ENCODE measurements at regions of chr17 and their contacts with region 1.

Region 1: DNA sequence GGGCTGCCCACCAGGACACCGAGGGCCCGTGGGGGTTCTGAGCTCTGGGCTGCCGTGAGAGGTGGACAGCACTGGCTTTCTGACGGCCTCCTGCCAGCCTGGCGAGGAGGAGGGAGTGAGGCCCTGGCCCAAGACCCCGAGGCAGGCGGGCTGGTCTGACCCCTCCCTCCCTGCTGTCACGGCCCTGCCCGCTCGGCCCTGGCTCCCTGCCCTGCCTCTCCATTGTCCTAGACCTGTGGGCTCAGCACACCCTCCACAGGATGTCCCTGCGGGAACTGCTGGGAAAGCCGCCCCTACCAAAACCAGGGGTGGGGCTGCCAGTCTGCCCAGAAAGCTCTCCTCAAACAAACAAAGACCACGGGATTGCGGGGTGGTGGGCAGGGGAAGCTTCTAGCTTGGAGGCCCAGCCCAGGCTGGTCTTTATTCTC is 20.7 kb downstream of the SPNS2 start:
- DNase-seq: peak; percentile 73
- H3K4me3 ChIP-seq: no peak overlapping the region
- H3K27ac ChIP-seq: peak overlapping the region; percentile 41
- H3K4me1 ChIP-seq: peaks cover 21% of the 10 kb centered on the region
- H3K27me3 ChIP-seq: no peaks in the 10 kb centered on the region
- CTCF ChIP-seq: no peak
- POLR2A ChIP-seq: no peak

Region 2: GRCh38 chr17:4504178-4504577 is 15.2 kb before region 1 on chr17:
- CTCF ChIA-PET with region 1: interaction called, 6 read pairs
- POLR2A ChIA-PET with region 1: no interaction called
- dilution Hi-C with region 1: no loop called
- intact Hi-C with region 1: loop called (anchors 2 kb)
- DNase-seq: no peak
- H3K4me3 ChIP-seq: no peak overlapping the region
- H3K27ac ChIP-seq: no peak overlapping the region
- H3K4me1 ChIP-seq: peaks cover 40% of the 10 kb centered on the region
- H3K27me3 ChIP-seq: no peaks in the 10 kb centered on the region
- CTCF ChIP-seq: no peak
- POLR2A ChIP-seq: no peak

Region 3: DNA sequence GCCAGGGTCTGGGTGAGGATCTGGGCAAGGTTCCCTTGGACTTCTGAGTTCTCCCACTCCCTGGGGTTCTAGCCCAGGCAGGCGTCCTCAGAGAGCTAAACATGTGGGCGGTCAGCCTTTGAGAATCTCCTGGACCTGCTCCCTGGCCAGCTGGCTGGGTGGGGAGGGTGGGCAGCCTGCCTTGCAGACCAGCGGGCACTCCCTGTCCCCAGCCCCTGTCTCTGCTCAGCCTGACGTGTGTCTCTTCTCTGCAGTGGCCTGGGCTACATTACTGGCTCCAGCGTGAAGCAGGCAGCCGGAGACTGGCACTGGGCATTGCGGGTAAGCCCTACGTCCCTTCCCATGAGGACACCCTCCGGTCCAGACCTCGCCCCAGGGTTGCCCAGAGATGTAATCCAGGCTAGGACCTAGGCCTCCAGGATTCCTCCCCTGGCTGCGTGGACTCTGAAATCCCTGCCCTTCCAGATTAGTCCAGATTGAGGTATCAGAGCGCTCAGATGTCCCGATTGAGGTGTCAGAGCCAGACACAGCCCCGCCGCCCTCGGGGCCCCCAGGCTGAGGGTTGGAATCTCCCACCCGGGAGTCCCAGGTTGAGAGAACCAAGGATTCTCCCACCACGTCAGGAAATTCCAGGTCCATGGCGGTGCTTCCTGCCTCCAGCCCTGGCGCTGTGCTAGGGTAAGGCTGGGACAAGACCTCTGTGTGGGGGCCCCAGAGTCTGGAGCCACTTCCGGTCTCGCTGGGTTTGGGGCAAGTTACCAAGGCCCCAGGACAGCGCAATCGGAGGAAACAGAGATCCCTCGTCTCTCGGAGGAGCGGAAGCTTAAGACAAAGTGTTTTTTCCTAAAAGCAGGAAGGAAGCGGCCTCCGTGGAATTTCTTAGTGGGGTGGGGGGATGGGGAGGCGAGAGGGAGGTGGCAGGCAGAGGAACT is 11.7 kb after region 1 on chr17:
- CTCF ChIA-PET with region 1: interaction called, 4 read pairs
- POLR2A ChIA-PET with region 1: no interaction called
- dilution Hi-C with region 1: no loop called
- intact Hi-C with region 1: loop called (anchors 1 kb)
- DNase-seq: peak; percentile 97
- H3K4me3 ChIP-seq: no peak overlapping the region
- H3K27ac ChIP-seq: peak overlapping the region; percentile 89
- H3K4me1 ChIP-seq: peaks cover 57% of the 10 kb centered on the region
- H3K27me3 ChIP-seq: no peaks in the 10 kb centered on the region
- CTCF ChIP-seq: no peak
- POLR2A ChIP-seq: peak; percentile 63